KBM-7 (cell line): ENCODE measurements at regions of chrX and their contacts with region 1.

Region 1: GRCh38 chrX:47854474-47854873 is 17.8 kb downstream of the ZNF81 start:
- DNase-seq: peak; percentile 65

Region 2: GRCh38 chrX:48025561-48025960 is 171.1 kb after region 1 on chrX:
- in situ Hi-C with region 1: loop called (anchors 25 kb)
- DNase-seq: peak; percentile 90

Region 3: DNA sequence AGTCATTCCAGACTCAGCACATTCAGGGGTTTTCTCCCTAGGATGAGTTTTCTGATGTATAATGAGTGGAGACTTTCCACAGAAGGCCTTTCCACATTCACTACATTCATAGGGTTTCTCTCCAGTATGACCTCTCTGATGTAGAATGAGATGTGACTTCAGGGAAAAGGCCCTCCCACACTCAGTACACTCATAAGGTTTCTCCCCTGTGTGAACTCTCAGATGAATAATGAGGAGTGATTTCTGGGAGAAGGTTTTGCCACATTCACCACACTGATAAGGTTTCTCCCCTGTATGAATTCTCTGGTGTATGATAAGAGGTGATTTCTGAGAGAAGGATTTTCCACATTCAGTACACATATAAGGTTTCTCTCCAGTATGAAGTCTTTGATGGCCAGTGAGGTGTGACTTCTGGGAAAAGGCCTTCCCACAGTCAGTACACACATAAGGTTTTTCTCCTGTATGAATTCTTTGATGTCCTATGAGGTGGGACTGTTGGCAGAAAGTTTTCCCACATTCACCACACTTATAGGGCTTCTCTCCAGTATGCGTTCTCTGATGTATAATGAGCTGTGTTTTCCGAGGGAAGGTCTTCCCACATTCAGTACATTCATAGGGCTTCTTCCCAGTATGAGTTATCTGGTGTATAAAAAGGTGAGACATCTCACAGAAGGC is 204.3 kb after region 1 on chrX:
- in situ Hi-C with region 1: no loop called
- DNase-seq: no peak